ENCODE measurements at regions of chr15 and their contacts with region 1.

Region 1: GRCh38 chr15:41230650-41231533 is at the starts of genes CHP1 and EXD1:
- H3K4me3 Mint-ChIP-seq: peak within 1 kb of the TSS; percentile 91
- H3K27ac Mint-ChIP-seq: peak within 1 kb of the TSS; percentile 96
- H3K4me1 Mint-ChIP-seq: peaks cover 31% of the 10 kb centered on the region
- H3K27me3 Mint-ChIP-seq: peaks cover 3% of the 10 kb centered on the region

Region 2: DNA sequence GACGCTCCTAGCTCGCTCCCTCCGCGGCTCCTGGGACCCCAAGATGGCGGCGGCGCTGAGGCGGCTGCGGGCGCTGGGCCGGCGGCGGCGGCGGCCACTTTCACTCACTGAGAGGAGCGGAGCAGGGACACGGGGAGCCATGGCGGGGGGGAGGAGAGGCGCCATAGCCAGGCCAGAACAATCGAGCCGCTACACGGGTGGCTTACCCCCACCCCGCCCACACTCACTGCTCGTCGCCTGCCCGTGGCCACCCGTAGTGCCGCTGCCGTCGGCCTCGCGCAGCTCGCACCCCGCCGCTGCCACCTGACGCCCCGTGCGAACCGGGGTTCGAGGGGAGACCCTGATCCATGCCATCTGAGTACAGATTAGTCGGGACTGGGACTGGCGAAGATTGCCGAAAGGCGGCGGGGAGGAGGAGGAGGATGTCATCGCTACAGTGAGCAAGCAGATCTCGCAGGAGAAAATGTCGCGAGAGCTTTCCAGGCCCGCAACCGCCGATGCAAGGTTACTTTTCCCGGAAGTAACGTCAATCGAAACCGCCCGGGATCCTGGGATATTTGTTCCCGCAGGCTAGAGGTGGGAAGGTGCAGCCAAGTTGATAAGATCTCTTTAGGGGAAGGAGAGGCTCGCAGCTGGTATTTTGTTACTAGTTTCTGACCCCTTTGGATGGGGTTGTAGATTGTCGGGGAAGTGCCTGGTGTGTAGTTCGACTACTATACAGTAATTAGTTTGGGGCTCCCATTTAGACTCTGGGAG is 114.6 kb before region 1 on chr15 and contains the start of gene INO80:
- intact Hi-C with region 1: loop called (anchors 1 kb)
- H3K4me3 Mint-ChIP-seq: peak within 1 kb of the TSS; percentile 98
- H3K27ac Mint-ChIP-seq: peak within 1 kb of the TSS; percentile 100
- H3K4me1 Mint-ChIP-seq: peaks cover 26% of the 10 kb centered on the region
- H3K27me3 Mint-ChIP-seq: peaks cover 2% of the 10 kb centered on the region